ENCODE measurements at regions of chr1 and their contacts with region 1.

Region 1: DNA sequence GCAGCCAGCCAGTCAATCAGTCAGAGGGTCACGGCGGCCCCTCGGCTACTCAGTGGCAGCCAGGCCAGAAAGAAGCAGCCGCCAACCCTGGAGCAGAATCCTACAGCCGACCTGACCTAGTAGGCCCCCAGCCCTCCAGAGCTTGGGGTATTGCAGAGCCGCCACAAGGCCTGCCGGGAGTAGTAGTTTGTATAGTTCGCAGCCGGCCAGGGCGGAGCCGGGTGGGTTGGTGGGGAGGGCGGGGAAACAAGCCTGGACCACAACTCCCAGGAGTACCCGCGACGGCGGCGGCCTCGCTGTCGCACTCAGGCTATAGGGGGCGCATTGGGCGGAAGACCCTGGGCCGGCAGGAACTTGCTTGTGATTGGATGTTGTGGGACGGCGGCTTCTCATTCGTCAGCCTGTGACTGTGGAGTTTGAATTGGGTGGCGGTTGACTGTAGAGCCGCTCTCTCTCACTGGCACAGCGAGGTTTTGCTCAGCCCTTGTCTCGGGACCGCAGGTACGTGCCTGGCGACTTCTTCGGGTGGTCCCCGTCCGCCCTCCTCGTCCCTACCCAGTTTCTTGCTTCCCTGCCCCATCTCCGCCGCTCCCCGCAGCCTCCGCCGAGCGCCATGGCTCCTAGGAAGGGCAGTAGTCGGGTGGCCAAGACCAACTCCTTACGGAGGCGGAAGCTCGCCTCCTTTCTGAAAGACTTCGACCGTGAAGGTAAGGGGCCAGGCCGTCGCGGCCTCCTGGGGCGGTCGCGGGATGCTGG is at the start of gene CDCA8:
- DNase-seq: peak; percentile 92 to 99 (median 97)
- ATAC-seq: peak; percentile 94
- H3K4me3 ChIP-seq: peak within 1 kb of the TSS; percentile 61
- H3K4me3 Mint-ChIP-seq: peak within 1 kb of the TSS; percentile 88 to 98 (median 96)
- H3K27ac ChIP-seq: peak within 1 kb of the TSS; percentile 77
- H3K27ac Mint-ChIP-seq: peak within 1 kb of the TSS; percentile 81 to 95 (median 88)
- H3K4me1 ChIP-seq: peaks cover 11 to 23% of the 10 kb centered on the region in 2 donors
- H3K4me1 Mint-ChIP-seq: peaks cover 23 to 54% (median 39%) of the 10 kb centered on the region in 7 donors
- H3K27me3 ChIP-seq: no peaks in the 10 kb centered on the region
- H3K27me3 Mint-ChIP-seq: peaks cover 0 to 3% (median 0%) of the 10 kb centered on the region in 5 donors
- total RNA-seq, gene CDCA8: 0.58 to 45.5 (median 0.92) TPM

Region 2: GRCh38 chr1:36463803-36464604 is 1228.3 kb before region 1 on chr1 and contains the start of gene MRPS15:
- CTCF ChIA-PET with region 1: no interaction called
- POLR2A ChIA-PET with region 1: no interaction called
- intact Hi-C with region 1: loop called in 1 of 2 experiments (anchors 1 kb)
- DNase-seq: peak; percentile 85 to 95 (median 93)
- ATAC-seq: peak; percentile 99
- H3K4me3 ChIP-seq: peak within 1 kb of the TSS; percentile 85
- H3K4me3 Mint-ChIP-seq: peak within 1 kb of the TSS; percentile 86 to 100 (median 97)
- H3K27ac ChIP-seq: peak within 1 kb of the TSS; percentile 91
- H3K27ac Mint-ChIP-seq: peak within 1 kb of the TSS; percentile 90 to 99 (median 98)
- H3K4me1 ChIP-seq: peaks cover 7 to 13% of the 10 kb centered on the region in 2 donors
- H3K4me1 Mint-ChIP-seq: peaks cover 18 to 54% (median 43%) of the 10 kb centered on the region in 7 donors
- H3K27me3 ChIP-seq: no peaks in the 10 kb centered on the region
- H3K27me3 Mint-ChIP-seq: no peaks in the 10 kb centered on the region
- total RNA-seq, gene MRPS15: 30.2 to 84.0 (median 36.3) TPM

Region 3: GRCh38 chr1:37514350-37515184 is 177.7 kb before region 1 on chr1 and contains the start of gene MEAF6:
- CTCF ChIA-PET with region 1: no interaction called
- POLR2A ChIA-PET with region 1: interaction called, 14 read pairs
- intact Hi-C with region 1: loop called (anchors 1 kb)
- DNase-seq: peak; percentile 76 to 92 (median 87)
- ATAC-seq: peak; percentile 99
- H3K4me3 ChIP-seq: peak within 1 kb of the TSS; percentile 87
- H3K4me3 Mint-ChIP-seq: peak within 1 kb of the TSS; percentile 92 to 99 (median 98)
- H3K27ac ChIP-seq: peak within 1 kb of the TSS; percentile 89
- H3K27ac Mint-ChIP-seq: peak within 1 kb of the TSS; percentile 93 to 99 (median 98)
- H3K4me1 ChIP-seq: peaks cover 16 to 22% of the 10 kb centered on the region in 2 donors
- H3K4me1 Mint-ChIP-seq: peaks cover 10 to 50% (median 43%) of the 10 kb centered on the region in 7 donors
- H3K27me3 ChIP-seq: no peaks in the 10 kb centered on the region
- H3K27me3 Mint-ChIP-seq: peaks cover 0 to 4% (median 0%) of the 10 kb centered on the region in 5 donors
- total RNA-seq, gene MEAF6: 45.0 to 89.5 (median 57.7) TPM

Region 4: DNA sequence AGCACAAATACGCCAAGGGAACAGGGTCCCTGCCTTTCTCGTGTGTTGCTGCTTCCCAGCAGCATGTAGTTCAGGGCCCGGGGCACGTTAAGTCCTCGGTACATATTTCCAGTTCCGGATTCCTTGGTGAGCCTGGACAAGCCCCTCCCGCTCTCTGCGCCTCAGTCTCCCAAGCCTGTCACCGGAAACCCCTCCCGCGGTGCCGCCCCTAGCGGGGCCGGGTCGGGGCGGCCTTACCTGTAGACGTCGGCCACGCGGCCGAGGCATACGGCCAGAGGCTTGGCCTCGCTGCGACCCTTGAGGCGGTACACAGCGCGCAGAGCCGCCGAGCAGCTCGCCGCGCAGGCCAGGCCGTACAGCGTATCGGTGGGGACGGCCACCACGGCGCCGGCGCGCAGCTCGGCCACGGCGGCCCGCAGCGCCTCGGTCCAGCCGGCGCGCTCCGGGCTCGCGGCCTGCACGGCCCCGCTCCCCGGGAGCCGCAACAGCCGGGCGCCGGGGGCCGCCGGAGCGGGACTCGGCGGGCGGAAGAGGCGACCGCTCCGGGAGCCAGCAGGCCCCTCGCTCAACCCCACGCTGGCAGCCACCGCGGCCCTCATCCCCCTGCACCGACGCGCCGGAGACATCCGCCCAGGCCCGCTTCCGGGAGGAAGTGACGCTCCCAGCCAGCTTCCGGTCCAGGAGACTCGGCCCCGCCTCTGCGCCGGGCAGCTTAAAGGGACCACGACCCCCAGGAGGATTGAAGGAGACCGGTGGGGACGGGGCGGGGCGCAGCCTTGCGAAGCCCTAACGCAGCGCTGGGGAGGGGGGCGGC is 115.5 kb after region 1 on chr1 and contains the starts of genes C1orf122 and YRDC:
- CTCF ChIA-PET with region 1: no interaction called
- POLR2A ChIA-PET with region 1: no interaction called
- intact Hi-C with region 1: loop called (anchors 1 kb)
- DNase-seq: peak; percentile 82 to 94 (median 88)
- ATAC-seq: peak; percentile 94
- H3K4me3 ChIP-seq: peak within 1 kb of the TSS; percentile 89
- H3K4me3 Mint-ChIP-seq: peak within 1 kb of the TSS; percentile 85 to 99 (median 96)
- H3K27ac ChIP-seq: peak within 1 kb of the TSS; percentile 96
- H3K27ac Mint-ChIP-seq: peak within 1 kb of the TSS; percentile 89 to 98 (median 96)
- H3K4me1 ChIP-seq: peaks cover 15 to 20% of the 10 kb centered on the region in 2 donors
- H3K4me1 Mint-ChIP-seq: peaks cover 27 to 55% (median 34%) of the 10 kb centered on the region in 7 donors
- H3K27me3 ChIP-seq: no peaks in the 10 kb centered on the region
- H3K27me3 Mint-ChIP-seq: no peaks in the 10 kb centered on the region
- total RNA-seq, gene C1orf122: 11.4 to 20.6 (median 11.7) TPM
- total RNA-seq, gene YRDC: 13.1 to 30.6 (median 22.3) TPM

Region 5: GRCh38 chr1:37946703-37947360 is 254.6 kb after region 1 on chr1 and contains the start of gene INPP5B:
- CTCF ChIA-PET with region 1: no interaction called
- POLR2A ChIA-PET with region 1: no interaction called
- intact Hi-C with region 1: loop called (anchors 1 kb)
- DNase-seq: peak; percentile 25 to 79 (median 53)
- ATAC-seq: peak; percentile 91
- H3K4me3 ChIP-seq: peak within 1 kb of the TSS; percentile 61
- H3K4me3 Mint-ChIP-seq: peak within 1 kb of the TSS; percentile 81 to 98 (median 92)
- H3K27ac ChIP-seq: peak within 1 kb of the TSS; percentile 62
- H3K27ac Mint-ChIP-seq: peak within 1 kb of the TSS; percentile 66 to 97 (median 89)
- H3K4me1 ChIP-seq: peaks cover 0 to 7% of the 10 kb centered on the region in 2 donors
- H3K4me1 Mint-ChIP-seq: peaks cover 13 to 26% (median 15%) of the 10 kb centered on the region in 7 donors
- H3K27me3 ChIP-seq: no peaks in the 10 kb centered on the region
- H3K27me3 Mint-ChIP-seq: no peaks in the 10 kb centered on the region
- total RNA-seq, gene INPP5B: 23.3 to 35.7 (median 30.6) TPM

Region 6: DNA sequence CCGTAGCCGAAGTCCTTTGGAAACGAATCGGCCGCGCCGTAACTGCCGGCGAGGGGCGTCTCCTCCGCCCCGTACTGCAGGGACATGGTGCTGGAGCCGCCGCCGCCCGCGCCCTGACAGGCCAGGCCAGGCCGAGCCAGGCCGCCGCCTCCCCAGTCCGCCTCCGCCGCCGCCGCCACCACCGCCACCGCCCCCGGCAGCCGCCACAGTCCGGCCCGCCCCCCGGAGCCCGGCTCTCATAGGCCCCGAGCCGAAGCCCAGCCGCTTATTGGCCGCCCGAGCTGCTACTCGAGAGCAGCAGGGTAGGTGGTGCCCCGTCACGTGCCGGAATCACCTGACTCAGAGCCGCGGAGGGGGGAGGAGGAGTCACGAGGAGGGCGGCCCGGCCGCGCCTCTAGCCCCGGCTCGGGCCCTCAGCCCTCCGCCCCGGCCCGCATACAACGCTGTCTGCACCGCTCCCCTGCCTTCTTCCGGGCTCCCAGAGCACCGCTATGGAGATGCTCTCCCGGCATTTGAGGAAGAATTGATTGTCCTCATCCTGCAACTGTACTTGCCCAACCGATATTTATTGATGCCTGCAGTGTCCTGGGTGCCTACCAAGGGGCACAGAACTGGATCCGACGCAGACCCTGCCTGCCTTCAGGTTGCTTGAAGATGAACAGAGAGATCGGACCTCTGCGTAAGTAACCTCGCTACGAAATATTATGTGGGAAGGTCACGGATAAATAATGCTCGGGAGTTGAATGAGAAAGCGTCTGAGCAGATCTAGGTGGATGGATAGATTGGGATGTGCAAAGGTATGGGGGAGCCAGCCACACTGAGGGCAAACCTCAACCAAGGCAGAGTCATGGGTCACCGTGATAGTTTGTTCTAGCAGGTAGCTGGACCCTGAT is 1167.6 kb after region 1 on chr1 and contains the start of gene RRAGC:
- CTCF ChIA-PET with region 1: no interaction called
- POLR2A ChIA-PET with region 1: no interaction called
- intact Hi-C with region 1: loop called in 1 of 2 experiments (anchors 10 kb)
- DNase-seq: peak; percentile 92 to 98 (median 96)
- ATAC-seq: peak; percentile 99
- H3K4me3 ChIP-seq: peak within 1 kb of the TSS; percentile 70
- H3K4me3 Mint-ChIP-seq: peak within 1 kb of the TSS; percentile 92 to 99 (median 96)
- H3K27ac ChIP-seq: peak within 1 kb of the TSS; percentile 78
- H3K27ac Mint-ChIP-seq: peak within 1 kb of the TSS; percentile 76 to 98 (median 88)
- H3K4me1 ChIP-seq: peaks cover 20 to 22% of the 10 kb centered on the region in 2 donors
- H3K4me1 Mint-ChIP-seq: peaks cover 29 to 88% (median 61%) of the 10 kb centered on the region in 7 donors
- H3K27me3 ChIP-seq: no peaks in the 10 kb centered on the region
- H3K27me3 Mint-ChIP-seq: no peaks in the 10 kb centered on the region
- total RNA-seq, gene RRAGC: 14.5 to 24.4 (median 16.8) TPM